ENCODE measurements at regions of chr15 and their contacts with region 1.

Region 1: DNA sequence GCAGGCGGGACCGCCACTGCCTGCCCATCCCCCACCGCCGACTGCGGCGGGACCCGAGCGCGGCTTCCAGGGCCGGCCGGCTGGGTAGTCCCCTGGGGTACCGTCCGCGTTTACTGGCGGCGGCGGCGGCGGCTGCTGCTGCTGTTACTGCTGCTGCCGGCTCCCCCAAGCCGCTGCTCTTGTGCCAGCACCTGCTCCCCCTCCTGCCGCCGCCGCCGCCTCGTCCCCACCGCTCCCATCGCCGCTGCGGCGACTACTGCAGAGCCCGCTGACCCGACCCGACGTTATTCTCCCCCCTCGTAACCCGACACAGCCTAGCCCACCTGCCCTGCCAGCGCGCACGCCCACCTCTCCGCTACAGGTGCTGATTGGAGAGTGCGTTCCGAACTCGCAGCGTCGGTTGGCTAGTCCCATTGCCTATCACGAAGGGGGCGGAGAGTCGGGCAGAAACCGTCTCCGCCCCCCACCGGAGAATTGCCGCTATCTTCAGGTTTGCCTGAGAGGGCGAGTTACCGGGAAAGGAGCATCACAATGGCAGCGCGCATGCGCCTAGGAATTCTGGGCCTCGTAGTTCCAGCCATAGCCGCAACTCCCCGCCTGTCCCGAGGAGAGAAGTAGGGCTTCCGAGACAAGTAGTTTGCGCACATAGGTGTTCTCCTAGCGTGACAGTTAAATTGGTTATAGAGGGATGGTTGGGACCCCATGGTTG is at the start of gene TTBK2:
- DNase-seq: peak; percentile 93 to 98 (median 97)
- ATAC-seq: peak; percentile 98
- H3K4me3 ChIP-seq: peak within 1 kb of the TSS; percentile 89
- H3K4me3 Mint-ChIP-seq: peak within 1 kb of the TSS; percentile 93 to 100 (median 97)
- H3K27ac ChIP-seq: peak within 1 kb of the TSS; percentile 71
- H3K27ac Mint-ChIP-seq: peak within 1 kb of the TSS; percentile 88 to 97 (median 95)
- H3K4me1 ChIP-seq: peaks cover 4 to 5% of the 10 kb centered on the region in 2 donors
- H3K4me1 Mint-ChIP-seq: peaks cover 14 to 40% (median 29%) of the 10 kb centered on the region in 7 donors
- H3K27me3 ChIP-seq: no peaks in the 10 kb centered on the region
- H3K27me3 Mint-ChIP-seq: peaks cover 0 to 3% (median 0%) of the 10 kb centered on the region in 5 donors
- total RNA-seq, gene TTBK2: 15.7 to 30.5 (median 28.8) TPM

Region 2: DNA sequence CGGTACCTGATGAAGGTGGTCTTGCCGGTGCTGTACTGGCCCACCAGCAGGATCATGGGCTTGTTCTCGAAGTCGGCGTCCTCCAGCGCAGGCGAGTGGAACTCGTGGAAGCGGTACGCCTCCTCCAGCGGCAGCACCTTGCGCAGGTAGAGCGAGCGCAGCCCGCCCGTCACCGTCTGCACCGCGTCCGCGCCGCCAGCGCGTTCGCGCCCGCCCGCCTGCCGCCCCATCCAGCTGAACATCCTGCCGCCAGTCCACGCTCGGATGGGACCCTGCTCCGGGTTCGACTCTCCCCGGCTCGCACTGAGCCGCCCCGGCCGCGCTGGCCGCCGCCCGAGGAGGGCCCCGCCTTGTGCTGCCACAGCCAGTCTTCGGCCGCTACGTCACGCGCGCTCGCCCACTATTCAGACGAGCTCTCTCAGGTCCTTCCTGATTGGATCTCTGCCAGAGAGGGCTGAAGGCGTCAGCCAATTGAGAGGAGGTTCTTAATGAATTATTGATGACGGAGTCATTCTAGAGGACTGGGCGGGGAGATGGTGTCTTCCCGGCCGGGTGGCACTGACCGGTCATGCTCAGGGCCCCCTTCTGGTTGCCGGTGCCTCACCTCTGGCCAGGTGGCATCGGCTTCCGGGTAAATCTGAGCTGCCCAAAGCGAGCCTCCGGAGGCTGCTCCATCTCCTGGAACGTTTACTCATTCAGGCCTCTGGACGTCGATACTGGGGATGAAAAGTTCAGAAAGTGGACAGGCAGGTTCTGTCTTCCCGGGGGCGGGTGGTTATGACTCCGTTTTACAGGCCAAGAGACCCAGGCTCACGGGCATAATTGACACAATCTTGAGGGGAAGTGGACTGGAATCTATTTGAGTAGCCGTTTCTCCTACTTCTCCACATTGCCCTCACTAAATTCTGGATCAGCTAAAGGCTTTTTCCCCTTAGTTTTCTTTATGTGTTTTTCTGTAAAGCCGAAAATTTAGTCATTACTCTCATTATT is 948.1 kb before region 1 on chr15 and contains the start of gene EHD4:
- CTCF ChIA-PET with region 1: no interaction called
- POLR2A ChIA-PET with region 1: no interaction called
- intact Hi-C with region 1: loop called in 1 of 2 experiments (anchors 5 kb)
- DNase-seq: peak; percentile 85 to 96 (median 94)
- ATAC-seq: peak; percentile 91
- H3K4me3 ChIP-seq: peak within 1 kb of the TSS; percentile 87
- H3K4me3 Mint-ChIP-seq: peak within 1 kb of the TSS; percentile 85 to 97 (median 94)
- H3K27ac ChIP-seq: peak within 1 kb of the TSS; percentile 83
- H3K27ac Mint-ChIP-seq: peak within 1 kb of the TSS; percentile 90 to 97 (median 95)
- H3K4me1 ChIP-seq: peaks cover 19 to 23% of the 10 kb centered on the region in 2 donors
- H3K4me1 Mint-ChIP-seq: peaks cover 31 to 55% (median 45%) of the 10 kb centered on the region in 7 donors
- H3K27me3 ChIP-seq: no peaks in the 10 kb centered on the region
- H3K27me3 Mint-ChIP-seq: peaks cover 0 to 17% (median 7%) of the 10 kb centered on the region in 5 donors
- total RNA-seq, gene EHD4: 10.4 to 48.3 (median 23.7) TPM

Region 3: GRCh38 chr15:42548253-42549031 is 372.2 kb before region 1 on chr15 and contains the starts of genes HAUS2 and LRRC57:
- CTCF ChIA-PET with region 1: no interaction called
- POLR2A ChIA-PET with region 1: interaction called, 3 read pairs
- intact Hi-C with region 1: loop called in 1 of 2 experiments (anchors 1 kb)
- DNase-seq: peak; percentile 79 to 93 (median 86)
- ATAC-seq: peak; percentile 89
- H3K4me3 ChIP-seq: peak within 1 kb of the TSS; percentile 86
- H3K4me3 Mint-ChIP-seq: peak within 1 kb of the TSS; percentile 93 to 99 (median 96)
- H3K27ac ChIP-seq: peak within 1 kb of the TSS; percentile 93
- H3K27ac Mint-ChIP-seq: peak within 1 kb of the TSS; percentile 95 to 99 (median 97)
- H3K4me1 ChIP-seq: peaks cover 21 to 23% of the 10 kb centered on the region in 2 donors
- H3K4me1 Mint-ChIP-seq: peaks cover 29 to 62% (median 51%) of the 10 kb centered on the region in 7 donors
- H3K27me3 ChIP-seq: no peaks in the 10 kb centered on the region
- H3K27me3 Mint-ChIP-seq: no peaks in the 10 kb centered on the region
- total RNA-seq, gene HAUS2: 12.0 to 35.4 (median 16.8) TPM
- total RNA-seq, gene LRRC57: 15.4 to 37.1 (median 18.0) TPM

Region 4: GRCh38 chr15:42704492-42704926 is 216.2 kb before region 1 on chr15:
- CTCF ChIA-PET with region 1: interaction called, 34 read pairs
- POLR2A ChIA-PET with region 1: no interaction called
- intact Hi-C with region 1: no loop called
- DNase-seq: peak in 8 of 9 donors; percentile 23 to 59 (median 53)
- ATAC-seq: peak; percentile 96
- H3K4me3 ChIP-seq: no peak overlapping the region
- H3K4me3 Mint-ChIP-seq: no peak overlapping the region
- H3K27ac ChIP-seq: no peak overlapping the region
- H3K27ac Mint-ChIP-seq: no peak overlapping the region
- H3K4me1 ChIP-seq: no peaks in the 10 kb centered on the region
- H3K4me1 Mint-ChIP-seq: peaks cover 0 to 10% (median 5%) of the 10 kb centered on the region in 7 donors
- H3K27me3 ChIP-seq: no peaks in the 10 kb centered on the region
- H3K27me3 Mint-ChIP-seq: no peaks in the 10 kb centered on the region

Region 5: DNA sequence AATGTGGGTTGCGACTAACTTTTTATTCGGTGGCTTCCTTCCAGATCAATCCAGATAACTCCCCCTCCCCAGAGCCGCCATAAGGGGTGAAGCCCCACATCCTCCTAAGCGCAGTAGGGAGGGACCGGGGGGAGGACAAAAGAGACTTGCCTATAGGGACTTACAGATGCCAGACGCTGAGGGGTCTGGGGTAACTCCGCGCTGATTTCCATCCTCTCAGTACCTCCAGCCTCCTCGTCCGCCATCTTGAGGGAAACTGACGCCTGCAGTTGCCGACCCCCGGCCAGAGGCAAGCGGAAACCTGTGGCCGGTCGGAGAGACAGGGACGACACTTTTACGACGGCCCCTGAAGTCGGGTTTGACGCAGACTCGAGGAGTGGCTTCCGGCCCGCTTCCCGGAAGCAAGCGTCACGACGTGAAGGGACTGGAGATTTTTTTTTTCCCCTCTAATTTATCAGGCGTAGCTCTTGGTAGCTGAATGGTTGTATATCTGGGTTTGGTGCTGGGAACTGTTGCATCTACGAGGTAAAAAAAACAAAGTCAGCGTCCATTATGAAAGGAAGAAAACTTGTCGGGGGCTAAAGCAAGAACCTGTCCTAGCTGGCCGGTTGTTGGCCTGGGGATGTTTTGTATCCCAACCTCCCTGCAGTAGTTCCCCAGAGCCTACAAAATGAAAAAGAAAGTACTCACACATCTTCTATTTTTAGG is 185.3 kb after region 1 on chr15 and contains the start of gene UBR1:
- CTCF ChIA-PET with region 1: no interaction called
- POLR2A ChIA-PET with region 1: no interaction called
- intact Hi-C with region 1: loop called (anchors 1 to 5 kb)
- DNase-seq: peak; percentile 65 to 91 (median 89)
- ATAC-seq: peak; percentile 94
- H3K4me3 ChIP-seq: peak within 1 kb of the TSS; percentile 86
- H3K4me3 Mint-ChIP-seq: peak within 1 kb of the TSS; percentile 86 to 99 (median 95)
- H3K27ac ChIP-seq: peak within 1 kb of the TSS; percentile 99
- H3K27ac Mint-ChIP-seq: peak within 1 kb of the TSS; percentile 97 to 99 (median 98)
- H3K4me1 ChIP-seq: peaks cover 21 to 24% of the 10 kb centered on the region in 2 donors
- H3K4me1 Mint-ChIP-seq: peaks cover 40 to 56% (median 52%) of the 10 kb centered on the region in 7 donors
- H3K27me3 ChIP-seq: no peaks in the 10 kb centered on the region
- H3K27me3 Mint-ChIP-seq: peaks cover 0 to 5% (median 0%) of the 10 kb centered on the region in 5 donors
- total RNA-seq, gene UBR1: 38.4 to 51.7 (median 48.0) TPM

Region 6: DNA sequence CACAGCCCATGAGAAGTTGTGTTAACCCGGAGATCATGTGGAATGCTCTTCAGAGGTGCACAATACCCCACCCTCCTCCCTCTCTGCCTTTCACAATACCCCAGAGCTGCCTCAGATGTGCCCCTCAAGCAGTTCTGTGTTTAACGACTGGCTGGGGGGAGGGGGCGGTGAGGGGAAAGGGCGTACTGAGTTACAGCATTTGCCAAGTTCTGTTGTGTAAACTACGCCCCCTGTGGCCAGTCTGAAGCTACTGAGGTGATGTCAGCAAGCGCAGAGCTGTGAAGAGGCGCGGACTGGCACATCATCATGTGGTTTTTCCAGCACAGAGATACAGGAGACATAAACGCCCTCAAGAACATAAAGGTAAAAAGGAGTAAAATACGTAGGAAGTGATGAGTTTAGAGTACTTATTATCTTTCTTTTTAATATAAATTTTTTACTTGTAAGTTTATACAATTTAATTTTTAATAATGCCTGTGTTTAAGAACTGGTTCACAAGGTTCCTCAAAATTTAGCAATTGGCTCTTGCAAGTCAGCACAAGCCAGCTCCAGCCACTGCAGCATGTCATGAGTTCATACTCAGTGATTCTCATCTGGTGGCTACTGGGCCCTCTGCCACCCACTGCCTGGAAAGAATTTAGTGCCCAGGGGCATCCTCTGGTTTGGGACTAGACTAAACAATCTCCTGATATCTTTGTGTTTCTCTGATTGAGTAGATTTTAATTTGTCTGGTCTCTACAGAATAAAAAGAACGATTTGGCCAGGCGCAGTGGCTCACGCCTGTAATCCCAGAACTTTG is 298.4 kb after region 1 on chr15:
- CTCF ChIA-PET with region 1: no interaction called
- POLR2A ChIA-PET with region 1: no interaction called
- intact Hi-C with region 1: no loop called
- DNase-seq: no peak
- ATAC-seq: no peak
- H3K4me3 ChIP-seq: no peak overlapping the region
- H3K4me3 Mint-ChIP-seq: no peak overlapping the region
- H3K27ac ChIP-seq: no peak overlapping the region
- H3K27ac Mint-ChIP-seq: no peak overlapping the region
- H3K4me1 ChIP-seq: no peaks in the 10 kb centered on the region
- H3K4me1 Mint-ChIP-seq: peaks cover 0 to 5% (median 0%) of the 10 kb centered on the region in 7 donors
- H3K27me3 ChIP-seq: no peaks in the 10 kb centered on the region
- H3K27me3 Mint-ChIP-seq: peaks cover 0 to 23% (median 7%) of the 10 kb centered on the region in 5 donors